Activated T-helper 2 cell treated with anti-CD3 and anti-CD28 coated beads, Interferon-gamma antibody, Interleukin-2, Interleukin-4, amounts not matched to agents 10 μg/mL and 5 μg/mL and 100 μg/mL, durations not matched to agents 14 hours and 24 hours and 36 hours (primary cell): ENCODE measurements at regions of chr22 and their contacts with region 1.

Region 1: DNA sequence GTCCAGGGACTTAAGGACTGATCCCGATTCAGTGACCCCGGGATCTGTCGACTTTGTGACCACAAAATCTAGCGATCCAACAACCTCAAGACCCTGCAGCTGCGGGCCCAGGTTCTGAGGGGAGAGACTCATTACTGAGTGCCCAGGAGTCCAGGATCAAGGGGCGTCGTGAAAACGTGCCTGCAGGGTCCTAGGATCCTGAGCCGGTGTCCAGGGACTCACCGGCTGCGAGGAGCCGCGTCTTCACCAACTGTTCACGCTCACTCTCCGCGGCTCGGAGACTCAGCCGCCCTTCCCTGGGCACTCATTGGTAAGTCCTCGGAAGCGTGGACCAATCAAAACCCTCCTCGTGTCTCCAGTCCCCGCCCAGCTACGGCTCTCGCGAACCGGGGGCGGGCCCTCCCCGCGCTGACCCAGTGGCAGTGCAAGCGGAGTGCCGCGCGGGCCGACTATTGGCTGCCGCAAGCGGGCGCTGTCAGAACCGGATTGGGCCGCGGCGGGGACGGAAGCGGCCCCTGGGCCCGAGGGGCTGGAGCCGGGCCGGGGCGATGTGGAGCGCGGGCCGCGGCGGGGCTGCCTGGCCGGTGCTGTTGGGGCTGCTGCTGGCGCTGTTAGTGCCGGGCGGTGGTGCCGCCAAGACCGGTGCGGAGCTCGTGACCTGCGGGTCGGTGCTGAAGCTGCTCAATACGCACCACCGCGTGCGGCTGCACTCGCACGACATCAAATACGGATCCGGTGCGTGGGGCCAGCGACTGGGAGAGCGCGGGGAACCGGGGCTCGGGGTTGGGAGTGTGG is at the start of gene SDF2L1:
- DNase-seq: peak; percentile 98
- H3K4me3 Mint-ChIP-seq: peak within 1 kb of the TSS; percentile 85
- H3K27ac Mint-ChIP-seq: peak within 1 kb of the TSS; percentile 90
- H3K4me1 Mint-ChIP-seq: peaks cover 24% of the 10 kb centered on the region
- H3K27me3 Mint-ChIP-seq: peaks cover 1% of the 10 kb centered on the region
- total RNA-seq, gene SDF2L1: 95.6 and 97.9 TPM in 2 replicates

Region 2: GRCh38 chr22:21567456-21568346 is 74.3 kb before region 1 on chr22 and contains the start of gene UBE2L3:
- intact Hi-C with region 1: loop called (anchors 2 kb)
- DNase-seq: peak; percentile 81
- H3K4me3 Mint-ChIP-seq: peak within 1 kb of the TSS; percentile 96
- H3K27ac Mint-ChIP-seq: peak within 1 kb of the TSS; percentile 90
- H3K4me1 Mint-ChIP-seq: peaks cover 34% of the 10 kb centered on the region
- H3K27me3 Mint-ChIP-seq: no peaks in the 10 kb centered on the region
- total RNA-seq, gene UBE2L3: 63.5 and 65.5 TPM in 2 replicates

Region 3: GRCh38 chr22:21629262-21630149 is 12.5 kb before region 1 on chr22 and contains the start of gene YDJC:
- intact Hi-C with region 1: loop called (anchors 1 kb)
- DNase-seq: peak; percentile 91
- H3K4me3 Mint-ChIP-seq: peak within 1 kb of the TSS; percentile 89
- H3K27ac Mint-ChIP-seq: peak within 1 kb of the TSS; percentile 90
- H3K4me1 Mint-ChIP-seq: peaks cover 36% of the 10 kb centered on the region
- H3K27me3 Mint-ChIP-seq: no peaks in the 10 kb centered on the region
- total RNA-seq, gene YDJC: 44.3 and 49.6 TPM in 2 replicates

Region 4: GRCh38 chr22:21652010-21652546 is 10.1 kb after region 1 on chr22:
- intact Hi-C with region 1: loop called (anchors 1 kb)
- DNase-seq: peak; percentile 88
- H3K4me3 Mint-ChIP-seq: peak overlapping the region; percentile 91
- H3K27ac Mint-ChIP-seq: peak overlapping the region; percentile 89
- H3K4me1 Mint-ChIP-seq: peaks cover 23% of the 10 kb centered on the region
- H3K27me3 Mint-ChIP-seq: no peaks in the 10 kb centered on the region

Region 5: GRCh38 chr22:21657361-21658032 is 15.5 kb after region 1 on chr22:
- intact Hi-C with region 1: loop called (anchors 1 kb)
- DNase-seq: peak; percentile 80
- H3K4me3 Mint-ChIP-seq: peak overlapping the region; percentile 76
- H3K27ac Mint-ChIP-seq: peak overlapping the region; percentile 82
- H3K4me1 Mint-ChIP-seq: peaks cover 17% of the 10 kb centered on the region
- H3K27me3 Mint-ChIP-seq: no peaks in the 10 kb centered on the region